ENCODE measurements at regions of chr14 and their contacts with region 1.

Region 1: GRCh38 chr14:77007975-77008421 is 20.5 kb downstream of the IRF2BPL start:
- DNase-seq: peak; percentile 59 to 87
- ATAC-seq: peak; percentile 87 to 94 (median 90)
- H3K4me3 ChIP-seq: no peak overlapping the region
- H3K27ac ChIP-seq: peak overlapping the region; percentile 62
- H3K4me1 ChIP-seq: peaks cover 35% of the 10 kb centered on the region
- H3K27me3 ChIP-seq: no peaks in the 10 kb centered on the region
- CTCF ChIP-seq: no peak

Region 2: GRCh38 chr14:76591266-76591665 is 416.7 kb before region 1 on chr14:
- intact Hi-C with region 1: no loop called
- DNase-seq: no peak
- ATAC-seq: no peak
- H3K4me3 ChIP-seq: no peak overlapping the region
- H3K27ac ChIP-seq: no peak overlapping the region
- H3K4me1 ChIP-seq: no peaks in the 10 kb centered on the region
- H3K27me3 ChIP-seq: peaks cover 0 to 4% (median 0%) of the 10 kb centered on the region in 3 donors
- CTCF ChIP-seq: no peak

Region 3: GRCh38 chr14:76956316-76957090 is 51.5 kb before region 1 on chr14:
- intact Hi-C with region 1: loop called in 1 of 2 experiments (anchors 5 kb)
- DNase-seq: peak; percentile 90 to 92
- ATAC-seq: peak; percentile 74 to 78 (median 76)
- H3K4me3 ChIP-seq: peak overlapping the region; percentile 62
- H3K27ac ChIP-seq: peak overlapping the region; percentile 99
- H3K4me1 ChIP-seq: peaks cover 53% of the 10 kb centered on the region
- H3K27me3 ChIP-seq: no peaks in the 10 kb centered on the region
- CTCF ChIP-seq: no peak

Region 4: GRCh38 chr14:77097700-77098528 is 89.9 kb after region 1 on chr14 and contains the start of gene CIPC:
- intact Hi-C with region 1: no loop called
- DNase-seq: peak; percentile 99 to 100
- ATAC-seq: peak; percentile 90 to 95 (median 90)
- H3K4me3 ChIP-seq: peak within 1 kb of the TSS; percentile 66
- H3K27ac ChIP-seq: peak within 1 kb of the TSS; percentile 98
- H3K4me1 ChIP-seq: peaks cover 39% of the 10 kb centered on the region
- H3K27me3 ChIP-seq: no peaks in the 10 kb centered on the region
- CTCF ChIP-seq: no peak
- total RNA-seq, gene CIPC: 83.8 to 133 (median 112) TPM

Region 5: GRCh38 chr14:77175607-77176242 is 167.7 kb after region 1 on chr14:
- intact Hi-C with region 1: no loop called
- DNase-seq: no peak
- ATAC-seq: no peak
- H3K4me3 ChIP-seq: no peak overlapping the region
- H3K27ac ChIP-seq: no peak overlapping the region
- H3K4me1 ChIP-seq: no peaks in the 10 kb centered on the region
- H3K27me3 ChIP-seq: peaks cover 0 to 9% (median 2%) of the 10 kb centered on the region in 3 donors
- CTCF ChIP-seq: no peak

Measured in psoas muscle (tissue), 8 donors.